Dendritic cell treated with granulocyte-macrophage colony-stimulating factor and Interleukin-4, amounts not matched to agents 40 ng/mL and 50 ng/mL, for 4 days (primary cell): ENCODE measurements at regions of chr3 and their contacts with region 1.

Region 1: GRCh38 chr3:151282921-151283320 is 4.6 kb upstream of the P2RY14 start:
- H3K4me3 Mint-ChIP-seq: no peak overlapping the region
- H3K27ac Mint-ChIP-seq: no peak overlapping the region
- H3K4me1 Mint-ChIP-seq: peaks cover 65% of the 10 kb centered on the region
- H3K27me3 Mint-ChIP-seq: no peaks in the 10 kb centered on the region

Region 2: DNA sequence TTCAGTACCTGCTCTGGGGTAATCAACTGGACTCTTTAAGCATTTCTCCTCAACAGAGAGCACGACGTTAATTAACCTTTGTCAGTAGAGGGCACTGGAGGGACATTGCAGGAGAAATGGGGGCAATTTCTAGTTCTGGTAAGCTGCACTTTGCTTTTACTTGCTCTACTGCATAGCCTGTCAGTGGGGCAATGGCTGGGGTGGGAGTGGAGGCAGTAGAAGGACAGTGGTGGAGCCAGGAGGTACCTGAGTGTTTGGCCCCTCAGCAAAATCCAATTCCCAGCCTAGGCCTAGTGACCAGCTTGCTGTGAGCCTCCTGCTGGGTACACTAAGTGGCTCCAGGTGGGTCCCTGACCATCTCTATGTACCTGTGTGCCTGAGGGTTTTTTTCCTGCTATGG is 215.8 kb before region 1 on chr3:
- intact Hi-C with region 1: no loop called
- H3K4me3 Mint-ChIP-seq: no peak overlapping the region
- H3K27ac Mint-ChIP-seq: no peak overlapping the region
- H3K4me1 Mint-ChIP-seq: no peaks in the 10 kb centered on the region
- H3K27me3 Mint-ChIP-seq: no peaks in the 10 kb centered on the region

Region 3: DNA sequence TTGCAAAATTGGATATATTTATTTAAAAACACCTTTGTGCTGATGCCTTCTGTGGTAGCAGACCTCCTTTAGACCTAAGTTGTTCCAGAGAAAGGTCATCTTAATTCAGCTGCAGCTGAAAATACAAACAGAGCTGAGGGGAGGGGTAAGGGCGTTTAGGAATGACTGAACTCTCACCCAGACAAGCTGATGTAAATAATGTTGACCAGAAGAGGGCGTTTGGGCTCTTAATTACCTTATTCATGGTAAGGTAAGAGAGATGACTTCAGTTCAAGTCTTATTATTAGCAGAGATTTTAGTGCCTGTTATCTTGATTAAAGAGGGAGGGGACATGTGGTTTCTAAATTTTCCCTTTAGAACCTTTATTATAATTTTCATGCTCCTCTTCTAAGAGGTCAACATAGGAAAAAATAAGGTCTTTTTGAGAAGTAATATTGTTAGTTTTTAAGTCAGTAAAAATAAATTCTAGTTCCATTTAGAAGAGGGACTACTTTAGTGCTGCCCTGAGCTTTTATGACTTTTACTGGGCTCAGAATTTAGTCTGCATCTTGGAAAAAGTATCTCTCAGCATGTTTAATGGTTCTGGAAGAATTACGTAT is 126.2 kb before region 1 on chr3:
- intact Hi-C with region 1: loop called (anchors 2 kb)
- H3K4me3 Mint-ChIP-seq: no peak overlapping the region
- H3K27ac Mint-ChIP-seq: no peak overlapping the region
- H3K4me1 Mint-ChIP-seq: peaks cover 13% of the 10 kb centered on the region
- H3K27me3 Mint-ChIP-seq: no peaks in the 10 kb centered on the region

Region 4: GRCh38 chr3:151227807-151228665 is 54.9 kb before region 1 on chr3:
- intact Hi-C with region 1: loop called (anchors 1 kb)
- H3K4me3 Mint-ChIP-seq: peak overlapping the region; percentile 13
- H3K27ac Mint-ChIP-seq: peak overlapping the region; percentile 80
- H3K4me1 Mint-ChIP-seq: peaks cover 75% of the 10 kb centered on the region
- H3K27me3 Mint-ChIP-seq: no peaks in the 10 kb centered on the region